CD8-positive, alpha-beta T cell (primary cell): ENCODE measurements at regions of chr5 and their contacts with region 1.

Region 1: GRCh38 chr5:174951146-174951780 is 226.9 kb downstream of the MSX2 start:
- DNase-seq: peak; percentile 2 to 73 (median 41)
- ATAC-seq: peak; percentile 49
- H3K4me3 ChIP-seq: no peak overlapping the region
- H3K4me3 Mint-ChIP-seq: no peak overlapping the region
- H3K27ac ChIP-seq: no peak overlapping the region
- H3K27ac Mint-ChIP-seq: no peak overlapping the region
- H3K4me1 ChIP-seq: no peaks in the 10 kb centered on the region
- H3K4me1 Mint-ChIP-seq: no peaks in the 10 kb centered on the region
- H3K27me3 ChIP-seq: no peaks in the 10 kb centered on the region
- H3K27me3 Mint-ChIP-seq: peaks cover 18% of the 10 kb centered on the region
- CTCF ChIP-seq: peak; percentile 51

Region 2: DNA sequence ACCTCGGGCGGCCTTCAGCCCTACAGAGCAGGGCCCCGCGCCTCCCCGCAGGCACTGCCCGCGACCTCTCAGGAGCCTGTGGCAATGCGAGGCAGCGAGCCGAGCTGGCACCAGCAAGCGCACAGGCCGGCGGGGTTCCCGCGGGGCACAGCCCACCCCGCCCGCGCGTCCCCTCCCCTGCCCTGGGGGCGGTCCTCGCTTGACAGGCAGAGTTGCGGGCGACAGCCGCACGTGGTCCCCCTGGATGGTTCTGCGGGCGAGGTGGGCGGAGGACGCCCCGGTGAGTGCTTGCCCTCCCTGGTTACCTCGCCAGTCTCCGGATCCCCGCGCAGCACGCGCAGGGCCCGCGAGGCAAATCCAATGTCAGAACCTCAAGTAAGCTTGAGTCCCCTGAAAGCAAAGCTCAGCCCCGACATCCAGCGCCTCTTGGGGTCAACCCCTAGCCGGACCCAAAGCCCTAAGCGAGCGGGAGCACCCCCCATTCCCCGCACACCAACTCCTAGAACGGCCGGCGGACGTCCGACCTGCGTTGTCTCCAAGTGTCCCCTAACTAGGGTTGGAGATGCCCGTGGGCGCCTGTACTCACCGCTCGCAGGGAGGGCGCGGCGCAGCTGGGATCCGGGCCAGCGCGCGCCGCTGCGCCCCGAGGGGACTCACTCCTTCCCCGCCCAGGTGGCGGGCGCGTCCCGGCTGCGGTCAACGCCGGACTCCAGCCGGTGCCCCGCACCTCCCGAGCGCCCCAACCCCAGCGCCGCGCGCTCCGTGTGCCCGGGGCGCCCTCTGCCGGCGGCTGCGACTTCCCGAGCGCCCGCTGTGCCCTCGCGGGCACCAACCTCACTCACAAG is 493.0 kb after region 1 on chr5 and contains the start of gene DRD1:
- CTCF ChIA-PET with region 1: interaction called, 5 read pairs
- POLR2A ChIA-PET with region 1: no interaction called
- intact Hi-C with region 1: loop called in 1 of 2 experiments (anchors 1 kb)
- DNase-seq: peak; percentile 2 to 70 (median 51)
- ATAC-seq: peak; percentile 55
- H3K4me3 ChIP-seq: peak within 1 kb of the TSS in 1 of 2 experiments; percentile 22
- H3K4me3 Mint-ChIP-seq: peak within 1 kb of the TSS; percentile 70
- H3K27ac ChIP-seq: no peak within 1 kb of the TSS
- H3K27ac Mint-ChIP-seq: no peak within 1 kb of the TSS
- H3K4me1 ChIP-seq: peaks cover 10% of the 10 kb centered on the region
- H3K4me1 Mint-ChIP-seq: peaks cover 6% of the 10 kb centered on the region
- H3K27me3 ChIP-seq: peaks cover 4 to 9% of the 10 kb centered on the region in 2 experiments
- H3K27me3 Mint-ChIP-seq: peaks cover 50% of the 10 kb centered on the region
- CTCF ChIP-seq: peak; percentile 61
- total RNA-seq, gene DRD1: not detected

Region 3: DNA sequence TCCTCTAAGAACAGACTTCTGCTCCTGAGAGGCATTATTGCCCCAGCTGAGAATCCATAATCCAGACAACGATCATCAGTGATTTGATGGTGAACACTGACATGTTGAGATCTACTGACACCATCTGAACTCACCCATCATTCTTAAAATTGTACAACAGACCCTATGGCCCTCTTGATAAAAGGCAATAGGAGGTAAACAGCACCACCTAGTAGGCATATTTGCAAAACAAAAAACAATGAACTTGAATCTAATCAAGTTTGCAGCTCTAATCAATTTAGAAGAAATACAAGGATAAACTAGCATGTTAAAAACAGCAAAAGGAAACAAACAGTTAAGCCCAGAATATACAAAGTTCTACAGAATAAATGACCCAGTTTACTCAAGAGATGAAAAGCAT is 616.7 kb after region 1 on chr5:
- CTCF ChIA-PET with region 1: no interaction called
- POLR2A ChIA-PET with region 1: no interaction called
- intact Hi-C with region 1: loop called in 1 of 2 experiments (anchors 5 kb)
- DNase-seq: peak in 2 of 9 experiments; percentile 10 to 32
- ATAC-seq: no peak
- H3K4me3 ChIP-seq: no peak overlapping the region
- H3K4me3 Mint-ChIP-seq: no peak overlapping the region
- H3K27ac ChIP-seq: no peak overlapping the region
- H3K27ac Mint-ChIP-seq: no peak overlapping the region
- H3K4me1 ChIP-seq: no peaks in the 10 kb centered on the region
- H3K4me1 Mint-ChIP-seq: no peaks in the 10 kb centered on the region
- H3K27me3 ChIP-seq: peaks cover 0 to 3% of the 10 kb centered on the region in 2 experiments
- H3K27me3 Mint-ChIP-seq: peaks cover 4% of the 10 kb centered on the region
- CTCF ChIP-seq: no peak

Region 4: GRCh38 chr5:175696139-175696854 is 745.0 kb after region 1 on chr5:
- CTCF ChIA-PET with region 1: no interaction called
- POLR2A ChIA-PET with region 1: no interaction called
- intact Hi-C with region 1: loop called in 1 of 2 experiments (anchors 10 kb)
- DNase-seq: peak; percentile 21 to 83 (median 71)
- ATAC-seq: peak; percentile 70
- H3K4me3 ChIP-seq: no peak overlapping the region
- H3K4me3 Mint-ChIP-seq: no peak overlapping the region
- H3K27ac ChIP-seq: no peak overlapping the region
- H3K27ac Mint-ChIP-seq: peak overlapping the region; percentile 76
- H3K4me1 ChIP-seq: peaks cover 11% of the 10 kb centered on the region
- H3K4me1 Mint-ChIP-seq: peaks cover 28% of the 10 kb centered on the region
- H3K27me3 ChIP-seq: no peaks in the 10 kb centered on the region
- H3K27me3 Mint-ChIP-seq: no peaks in the 10 kb centered on the region
- CTCF ChIP-seq: peak; percentile 57

Region 5: GRCh38 chr5:175718401-175719108 is 767.3 kb after region 1 on chr5:
- CTCF ChIA-PET with region 1: interaction called, 8 read pairs
- POLR2A ChIA-PET with region 1: interaction called, 5 read pairs
- intact Hi-C with region 1: loop called (anchors 5 kb)
- DNase-seq: peak in 7 of 9 experiments; percentile 39 to 58 (median 51)
- ATAC-seq: peak; percentile 46
- H3K4me3 ChIP-seq: no peak overlapping the region
- H3K4me3 Mint-ChIP-seq: no peak overlapping the region
- H3K27ac ChIP-seq: no peak overlapping the region
- H3K27ac Mint-ChIP-seq: no peak overlapping the region
- H3K4me1 ChIP-seq: no peaks in the 10 kb centered on the region
- H3K4me1 Mint-ChIP-seq: no peaks in the 10 kb centered on the region
- H3K27me3 ChIP-seq: no peaks in the 10 kb centered on the region
- H3K27me3 Mint-ChIP-seq: no peaks in the 10 kb centered on the region
- CTCF ChIP-seq: peak; percentile 57